IMR-90 (cell line): ENCODE measurements at regions of chr5 and their contacts with region 1.

Region 1: GRCh38 chr5:129904102-129904666 is at the start of gene CHSY3:
- DNase-seq: peak; percentile 54
- ATAC-seq: peak; percentile 91
- H3K4me3 ChIP-seq: peak within 1 kb of the TSS; percentile 90
- H3K27ac ChIP-seq: no peak within 1 kb of the TSS
- H3K4me1 ChIP-seq: peaks cover 5% of the 10 kb centered on the region
- H3K27me3 ChIP-seq: peaks cover 12% of the 10 kb centered on the region; the same call in 1 of the 2 replicates
- CTCF ChIP-seq: no peak
- POLR2A ChIP-seq: no peak
- RAD21 ChIP-seq: no peak
- total RNA-seq, gene CHSY3: 1.3 and 1.4 TPM in 2 replicates

Region 2: GRCh38 chr5:129341306-129341705 is 562.9 kb before region 1 on chr5:
- CTCF ChIA-PET with region 1: no interaction called
- POLR2A ChIA-PET with region 1: no interaction called
- dilution Hi-C with region 1: no loop called
- in situ Hi-C with region 1: no loop called
- intact Hi-C with region 1: no loop called
- DNase-seq: no peak
- ATAC-seq: no peak
- H3K4me3 ChIP-seq: no peak overlapping the region
- H3K27ac ChIP-seq: no peak overlapping the region
- H3K4me1 ChIP-seq: no peaks in the 10 kb centered on the region
- H3K27me3 ChIP-seq: no peaks in the 10 kb centered on the region
- CTCF ChIP-seq: no peak
- POLR2A ChIP-seq: no peak
- RAD21 ChIP-seq: no peak

Region 3: GRCh38 chr5:129884322-129884721 is 19.9 kb before region 1 on chr5:
- CTCF ChIA-PET with region 1: no interaction called
- POLR2A ChIA-PET with region 1: interaction called, 15 read pairs
- dilution Hi-C with region 1: no loop called
- in situ Hi-C with region 1: no loop called
- intact Hi-C with region 1: no loop called
- DNase-seq: no peak
- ATAC-seq: no peak
- H3K4me3 ChIP-seq: no peak overlapping the region
- H3K27ac ChIP-seq: no peak overlapping the region
- H3K4me1 ChIP-seq: no peaks in the 10 kb centered on the region
- H3K27me3 ChIP-seq: no peaks in the 10 kb centered on the region
- CTCF ChIP-seq: no peak
- POLR2A ChIP-seq: no peak
- RAD21 ChIP-seq: no peak

Region 4: DNA sequence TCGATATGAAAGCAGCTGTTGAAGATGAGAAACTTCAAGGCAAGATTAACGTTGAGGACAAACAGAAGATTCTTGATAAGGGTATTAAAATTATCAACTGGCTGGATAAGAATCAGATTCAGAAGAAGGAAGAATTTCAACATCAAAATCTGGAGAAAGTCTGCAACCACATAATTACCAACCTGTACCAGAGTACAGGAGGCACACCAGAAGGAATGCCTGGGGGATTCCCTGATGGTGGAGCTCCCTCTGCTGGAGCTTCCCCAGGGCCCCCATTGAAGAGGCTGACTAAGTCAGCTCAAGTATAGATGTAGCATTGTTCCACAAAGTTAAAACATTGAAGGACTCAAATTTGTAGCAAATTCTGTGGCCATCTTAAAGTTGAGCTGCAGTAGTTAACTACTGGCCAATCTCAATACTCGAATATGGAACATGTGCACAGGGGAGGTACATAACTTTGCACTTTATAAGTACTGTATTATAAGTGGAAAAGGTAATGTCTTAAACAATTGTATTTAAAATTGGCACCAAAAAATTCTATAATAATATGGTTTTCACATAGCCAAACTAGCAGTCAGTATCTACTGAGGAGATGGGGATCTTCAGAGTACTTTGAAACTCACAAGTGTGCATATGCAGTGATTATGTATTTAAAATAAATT is 237.6 kb after region 1 on chr5:
- CTCF ChIA-PET with region 1: interaction called, 3 read pairs
- POLR2A ChIA-PET with region 1: no interaction called
- dilution Hi-C with region 1: no loop called
- in situ Hi-C with region 1: no loop called
- intact Hi-C with region 1: loop called (anchors 1 kb)
- DNase-seq: no peak
- ATAC-seq: no peak
- H3K4me3 ChIP-seq: no peak overlapping the region
- H3K27ac ChIP-seq: no peak overlapping the region
- H3K4me1 ChIP-seq: no peaks in the 10 kb centered on the region
- H3K27me3 ChIP-seq: no peaks in the 10 kb centered on the region
- CTCF ChIP-seq: peak; percentile 33
- POLR2A ChIP-seq: no peak
- RAD21 ChIP-seq: peak; percentile 49

Region 5: DNA sequence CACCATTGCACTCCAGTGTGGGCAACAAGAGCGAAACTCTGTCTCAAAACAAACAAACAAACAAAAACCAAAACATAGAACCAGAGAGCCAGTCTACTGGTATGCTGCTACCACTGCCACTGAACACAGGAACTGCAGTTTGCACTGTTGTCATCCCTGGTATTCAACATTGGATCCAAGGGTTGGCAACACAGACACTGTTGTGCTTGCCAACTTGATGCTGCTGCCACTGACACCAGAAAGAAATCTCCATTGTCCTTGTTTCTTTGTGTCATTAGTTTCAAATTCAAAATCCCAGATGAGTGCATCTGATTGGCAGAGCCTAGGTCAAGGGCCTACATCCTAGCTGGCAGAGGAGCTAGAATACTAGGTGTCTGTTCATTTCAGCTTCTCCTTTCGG is 1244.7 kb after region 1 on chr5:
- CTCF ChIA-PET with region 1: no interaction called
- POLR2A ChIA-PET with region 1: no interaction called
- dilution Hi-C with region 1: no loop called
- in situ Hi-C with region 1: no loop called
- intact Hi-C with region 1: no loop called
- DNase-seq: no peak
- ATAC-seq: no peak
- H3K4me3 ChIP-seq: no peak overlapping the region
- H3K27ac ChIP-seq: no peak overlapping the region
- H3K4me1 ChIP-seq: peaks cover 3% of the 10 kb centered on the region; the same call in 1 of the 2 replicates
- H3K27me3 ChIP-seq: no peaks in the 10 kb centered on the region
- CTCF ChIP-seq: no peak
- POLR2A ChIP-seq: no peak
- RAD21 ChIP-seq: no peak

Region 6: GRCh38 chr5:131417240-131417869 is 1513.2 kb after region 1 on chr5:
- CTCF ChIA-PET with region 1: no interaction called
- POLR2A ChIA-PET with region 1: no interaction called
- dilution Hi-C with region 1: no loop called
- in situ Hi-C with region 1: loop called (anchors 25 kb)
- intact Hi-C with region 1: loop called (anchors 2 kb)
- DNase-seq: peak; percentile 71
- ATAC-seq: peak; percentile 76
- H3K4me3 ChIP-seq: no peak overlapping the region
- H3K27ac ChIP-seq: no peak overlapping the region
- H3K4me1 ChIP-seq: no peaks in the 10 kb centered on the region
- H3K27me3 ChIP-seq: no peaks in the 10 kb centered on the region
- CTCF ChIP-seq: peak; percentile 84
- POLR2A ChIP-seq: no peak
- RAD21 ChIP-seq: peak; percentile 85